Posterior vena cava (tissue), 2 donors: ENCODE measurements at regions of chr11 and their contacts with region 1.

Region 1: GRCh38 chr11:128172046-128172878 is 415.1 kb downstream of the ETS1 start:
- DNase-seq: peak; percentile 91

Region 2: DNA sequence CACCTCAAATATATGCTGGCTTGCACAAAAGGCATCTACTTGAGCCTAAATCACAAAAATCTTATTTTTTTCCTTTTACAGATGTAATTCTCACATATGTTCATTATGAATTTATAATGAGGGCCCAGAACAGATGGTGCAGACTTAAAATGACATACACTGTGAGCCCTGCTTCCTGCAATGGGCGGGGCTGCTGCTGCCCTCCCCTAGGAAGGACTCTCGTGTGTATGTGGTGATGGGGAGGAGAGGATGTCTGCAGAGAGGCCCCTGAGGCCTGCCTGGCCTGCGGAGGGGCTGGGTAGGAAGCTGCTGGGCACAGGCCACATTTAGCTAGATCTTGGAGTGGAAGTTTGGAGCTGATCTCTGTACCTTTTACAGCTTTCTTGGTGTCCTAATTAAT is 938.3 kb before region 1 on chr11:
- intact Hi-C with region 1: no loop called
- DNase-seq: no peak

Region 3: GRCh38 chr11:128105950-128106349 is 66.3 kb before region 1 on chr11:
- intact Hi-C with region 1: no loop called
- DNase-seq: no peak

Region 4: DNA sequence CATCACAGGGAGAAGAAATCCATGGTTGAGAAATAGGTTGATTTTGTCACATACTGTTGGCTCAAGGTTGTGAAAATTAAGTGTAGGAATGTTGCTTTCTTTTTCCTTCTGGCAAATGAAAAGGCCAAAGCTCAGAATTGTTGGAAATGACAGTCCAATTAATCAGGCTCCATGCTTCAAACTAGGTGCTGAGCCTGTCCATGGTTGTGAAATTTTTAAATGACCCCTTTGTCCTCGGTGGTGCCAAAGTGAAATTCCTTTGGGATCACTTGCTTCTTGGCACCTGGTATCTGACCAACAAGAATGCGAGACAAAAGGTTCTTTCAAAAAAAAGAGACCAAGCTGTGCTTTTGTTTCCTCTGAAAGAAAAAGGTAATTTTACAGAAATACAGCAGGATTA is 36.8 kb before region 1 on chr11:
- intact Hi-C with region 1: no loop called
- DNase-seq: no peak

Region 5: DNA sequence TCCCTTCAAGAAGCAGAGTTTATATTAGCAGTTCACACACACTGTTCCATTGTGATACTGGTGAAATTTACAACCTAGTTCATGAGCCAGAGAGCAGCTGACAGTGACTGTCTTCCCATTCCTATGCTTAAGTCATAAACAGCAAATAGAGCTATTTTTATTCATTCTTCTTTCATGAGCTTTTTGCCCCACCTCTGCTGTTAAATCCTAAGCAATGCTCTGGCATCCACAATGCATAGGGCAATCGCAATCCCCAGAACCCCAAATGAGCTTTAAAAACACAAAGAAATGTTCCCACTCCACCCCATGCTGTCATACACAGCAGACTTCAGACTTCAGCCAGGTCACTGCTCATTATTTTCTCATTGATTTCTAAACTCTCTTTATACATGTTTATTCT is 107.6 kb after region 1 on chr11:
- intact Hi-C with region 1: loop called in 1 of 2 experiments (anchors 10 kb)
- DNase-seq: no peak

Region 6: GRCh38 chr11:128630367-128631230 is 458.3 kb after region 1 on chr11:
- intact Hi-C with region 1: loop called in 1 of 2 experiments (anchors 5 kb)
- DNase-seq: peak; percentile 97

Region 7: GRCh38 chr11:128831174-128832120 is 659.2 kb after region 1 on chr11:
- intact Hi-C with region 1: loop called in 1 of 2 experiments (anchors 10 kb)
- DNase-seq: peak; percentile 94